Mammary epithelial cell (primary cell): ENCODE measurements at regions of chr7 and their contacts with region 1.

Region 1: GRCh38 chr7:105439174-105439893 is 50.6 kb upstream of the SRPK2 start:
- DNase-seq: peak; percentile 95
- H3K4me3 ChIP-seq: peak overlapping the region; percentile 17 to 23 (median 17)
- H3K27ac ChIP-seq: peak overlapping the region; percentile 88
- H3K4me1 ChIP-seq: peaks cover 21% of the 10 kb centered on the region
- H3K27me3 ChIP-seq: no peaks in the 10 kb centered on the region
- CTCF ChIP-seq: peak in 1 of 2 donors; percentile 15

Region 2: GRCh38 chr7:105454095-105454747 is 14.9 kb after region 1 on chr7:
- CTCF ChIA-PET with region 1: no interaction called
- dilution Hi-C with region 1: no loop called
- in situ Hi-C with region 1: no loop called
- intact Hi-C with region 1: loop called (anchors 2 kb)
- DNase-seq: peak; percentile 68
- H3K4me3 ChIP-seq: no peak overlapping the region
- H3K27ac ChIP-seq: peak overlapping the region; percentile 61
- H3K4me1 ChIP-seq: peaks cover 16% of the 10 kb centered on the region
- H3K27me3 ChIP-seq: no peaks in the 10 kb centered on the region
- CTCF ChIP-seq: no peak

Region 3: GRCh38 chr7:105531792-105532671 is 92.7 kb after region 1 on chr7 and contains the start of gene RINT1:
- CTCF ChIA-PET with region 1: interaction called, 12 read pairs
- dilution Hi-C with region 1: no loop called
- in situ Hi-C with region 1: no loop called
- intact Hi-C with region 1: no loop called
- DNase-seq: peak; percentile 85
- H3K4me3 ChIP-seq: peak within 1 kb of the TSS; percentile 83 to 100 (median 92)
- H3K27ac ChIP-seq: peak within 1 kb of the TSS; percentile 66
- H3K4me1 ChIP-seq: peaks cover 12% of the 10 kb centered on the region
- H3K27me3 ChIP-seq: no peaks in the 10 kb centered on the region
- CTCF ChIP-seq: peak; percentile 61 to 82
- total RNA-seq, gene RINT1: 15.8 to 21.4 TPM

Region 4: GRCh38 chr7:105786520-105787468 is 347.5 kb after region 1 on chr7:
- CTCF ChIA-PET with region 1: no interaction called
- dilution Hi-C with region 1: no loop called
- in situ Hi-C with region 1: no loop called
- intact Hi-C with region 1: no loop called
- DNase-seq: peak; percentile 83
- H3K4me3 ChIP-seq: no peak overlapping the region
- H3K27ac ChIP-seq: no peak overlapping the region
- H3K4me1 ChIP-seq: peaks cover 38% of the 10 kb centered on the region
- H3K27me3 ChIP-seq: no peaks in the 10 kb centered on the region
- CTCF ChIP-seq: no peak